GM10248 (cell line): ENCODE measurements at regions of chr15 and their contacts with region 1.

Region 1: GRCh38 chr15:94324117-94324826 is 92.9 kb downstream of the MCTP2 start:
- DNase-seq: peak; percentile 64
- CTCF ChIP-seq: peak; percentile 83

Region 2: GRCh38 chr15:94119923-94120775 is 204.1 kb before region 1 on chr15:
- CTCF ChIA-PET with region 1: interaction called, 11 read pairs
- POLR2A ChIA-PET with region 1: no interaction called
- DNase-seq: peak; percentile 53
- CTCF ChIP-seq: peak; percentile 86

Region 3: GRCh38 chr15:94230956-94231722 is 93.1 kb before region 1 on chr15 and contains the start of gene MCTP2:
- CTCF ChIA-PET with region 1: interaction called, 11 read pairs
- POLR2A ChIA-PET with region 1: no interaction called
- DNase-seq: peak; percentile 74
- CTCF ChIP-seq: no peak

Region 4: GRCh38 chr15:94306700-94307650 is 17.3 kb before region 1 on chr15:
- CTCF ChIA-PET with region 1: interaction called, 70 read pairs
- POLR2A ChIA-PET with region 1: no interaction called
- DNase-seq: peak; percentile 61
- CTCF ChIP-seq: no peak

Region 5: GRCh38 chr15:94346282-94346681 is 22.0 kb after region 1 on chr15:
- CTCF ChIA-PET with region 1: interaction called, 18 read pairs
- POLR2A ChIA-PET with region 1: no interaction called
- DNase-seq: no peak
- CTCF ChIP-seq: no peak